Activated CD4-positive, alpha-beta T cell treated with anti-CD3 and anti-CD28 coated beads for 36 hours (primary cell): ENCODE measurements at regions of chr19 and their contacts with region 1.

Region 1: DNA sequence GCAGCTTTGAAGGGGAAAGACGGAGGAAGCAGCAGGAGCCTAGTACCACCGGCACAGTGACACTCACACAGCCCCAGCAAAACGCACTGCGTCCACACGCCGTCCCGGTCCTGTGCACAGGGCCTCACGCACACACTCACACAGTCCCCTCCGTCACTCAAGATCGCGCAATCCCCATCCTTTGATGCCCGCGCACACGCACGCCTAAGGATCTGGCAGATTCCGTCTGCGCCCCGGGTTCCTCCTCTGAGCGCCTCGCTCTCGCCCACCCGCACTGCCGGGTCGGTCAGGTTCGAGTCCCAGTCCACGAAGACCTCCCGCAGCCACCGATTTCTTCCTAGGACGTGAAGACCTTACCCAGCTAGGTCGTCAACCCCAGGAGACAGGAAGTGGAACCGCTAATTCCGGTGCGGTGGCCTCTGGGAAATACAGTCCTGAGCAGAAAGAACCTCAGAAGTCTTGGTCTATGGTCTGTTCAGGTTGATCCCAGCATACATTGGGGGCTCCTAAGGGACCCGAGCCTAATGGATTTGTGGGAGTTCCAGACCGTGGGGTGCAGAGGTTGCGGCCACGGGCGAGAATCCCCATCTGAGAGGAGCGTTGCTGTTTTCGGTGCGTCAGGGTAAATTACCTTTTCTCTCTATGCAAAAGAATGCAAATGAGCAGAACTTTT is at the start of gene ZNF780B:
- DNase-seq: peak; percentile 84
- ATAC-seq: peak; percentile 93
- H3K4me3 Mint-ChIP-seq: peak within 1 kb of the TSS; percentile 93
- H3K27ac Mint-ChIP-seq: peak within 1 kb of the TSS; percentile 97
- H3K4me1 Mint-ChIP-seq: peaks cover 38% of the 10 kb centered on the region
- H3K27me3 Mint-ChIP-seq: peaks cover 8% of the 10 kb centered on the region
- total RNA-seq, gene ZNF780B: 17.4 to 18.8 TPM

Region 2: DNA sequence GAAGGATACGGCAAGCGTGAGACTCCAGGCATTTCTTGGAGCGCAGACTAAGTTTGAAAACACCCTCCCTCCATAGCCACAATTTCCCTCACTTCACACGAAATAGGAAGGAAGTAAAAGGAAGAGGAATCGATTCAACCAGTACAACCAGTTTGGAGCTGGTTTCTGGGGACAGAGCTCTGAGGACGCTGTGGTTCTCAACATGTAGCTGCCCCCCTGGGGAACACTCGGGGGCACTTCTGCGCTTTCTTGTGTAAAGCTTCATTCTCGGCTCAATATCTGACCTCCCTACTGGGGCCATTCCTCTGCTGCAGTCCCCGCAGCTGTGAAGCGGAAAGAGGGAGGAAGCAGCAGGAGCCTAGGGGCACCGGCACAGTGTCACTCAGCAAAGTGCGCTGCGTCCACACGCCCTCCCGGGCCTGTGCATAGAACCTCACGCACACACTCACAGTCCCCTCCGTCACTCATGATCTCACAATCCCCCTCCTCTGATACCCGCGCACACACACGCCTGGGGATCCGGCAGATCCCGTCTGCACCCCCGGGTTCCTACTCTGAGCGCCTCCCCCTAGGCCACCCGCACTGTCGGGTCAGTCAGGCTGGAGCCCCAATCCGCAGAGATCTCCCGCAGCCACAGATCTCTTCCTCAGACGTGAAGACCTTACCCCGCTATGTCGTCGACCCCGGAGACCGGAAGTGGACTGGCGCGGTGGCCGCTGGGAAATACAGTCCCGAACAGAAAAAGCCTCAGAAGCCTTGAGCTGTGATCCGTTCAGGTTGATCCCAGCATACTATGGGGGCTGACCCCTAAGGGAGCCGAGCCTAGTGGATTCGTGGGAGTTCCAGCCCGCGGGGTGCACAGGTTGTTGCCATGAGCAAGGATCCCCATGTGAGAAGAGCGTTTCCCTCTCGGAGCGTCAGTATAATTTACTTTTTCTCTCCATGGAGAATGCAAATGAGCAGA is 34.6 kb after region 1 on chr19 and contains the start of gene ZNF780A:
- CTCF ChIA-PET with region 1: interaction called, 4 read pairs
- POLR2A ChIA-PET with region 1: interaction called, 3 read pairs
- intact Hi-C with region 1: loop called in 1 of 2 experiments (anchors 1 kb)
- DNase-seq: peak; percentile 88
- ATAC-seq: peak; percentile 94
- H3K4me3 Mint-ChIP-seq: peak within 1 kb of the TSS; percentile 97
- H3K27ac Mint-ChIP-seq: peak within 1 kb of the TSS; percentile 100
- H3K4me1 Mint-ChIP-seq: peaks cover 34% of the 10 kb centered on the region
- H3K27me3 Mint-ChIP-seq: peaks cover 5% of the 10 kb centered on the region
- total RNA-seq, gene ZNF780A: 19.2 to 19.4 TPM

Region 3: DNA sequence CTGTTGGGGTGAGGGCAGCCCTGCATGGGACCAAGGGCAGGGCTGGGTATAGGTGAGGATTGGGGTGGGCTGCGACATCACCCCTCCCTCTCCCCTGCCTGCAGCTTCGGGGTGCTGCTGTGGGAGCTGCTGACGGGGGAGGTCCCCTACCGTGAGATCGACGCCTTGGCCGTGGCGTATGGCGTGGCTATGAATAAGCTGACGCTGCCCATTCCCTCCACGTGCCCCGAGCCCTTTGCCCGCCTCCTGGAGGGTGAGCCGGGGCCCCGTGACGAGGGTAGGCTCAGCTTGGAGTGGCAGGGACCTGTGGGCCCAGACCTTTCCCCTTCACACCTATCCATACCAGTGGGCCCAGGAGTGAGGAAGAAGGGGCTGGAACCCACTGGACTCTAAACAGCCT is 148.4 kb after region 1 on chr19:
- CTCF ChIA-PET with region 1: no interaction called
- POLR2A ChIA-PET with region 1: no interaction called
- intact Hi-C with region 1: no loop called
- DNase-seq: no peak
- ATAC-seq: no peak
- H3K4me3 Mint-ChIP-seq: no peak overlapping the region
- H3K27ac Mint-ChIP-seq: no peak overlapping the region
- H3K4me1 Mint-ChIP-seq: no peaks in the 10 kb centered on the region
- H3K27me3 Mint-ChIP-seq: no peaks in the 10 kb centered on the region